IMR-90 (cell line): ENCODE measurements at regions of chr10 and their contacts with region 1.

Region 1: GRCh38 chr10:46234431-46235060 is 52.3 kb upstream of the ANTXRL start:
- DNase-seq: no peak
- ATAC-seq: no peak
- H3K4me3 ChIP-seq: no peak overlapping the region
- H3K27ac ChIP-seq: no peak overlapping the region
- H3K4me1 ChIP-seq: peaks cover 11% of the 10 kb centered on the region
- H3K27me3 ChIP-seq: no peaks in the 10 kb centered on the region; the same call in 1 of the 2 replicates
- CTCF ChIP-seq: no peak
- POLR2A ChIP-seq: no peak
- RAD21 ChIP-seq: no peak

Region 2: GRCh38 chr10:46318799-46319198 is 84.3 kb after region 1 on chr10:
- CTCF ChIA-PET with region 1: no interaction called
- POLR2A ChIA-PET with region 1: no interaction called
- dilution Hi-C with region 1: no loop called
- in situ Hi-C with region 1: no loop called
- intact Hi-C with region 1: loop called (anchors 5 kb)
- DNase-seq: no peak
- ATAC-seq: no peak
- H3K4me3 ChIP-seq: no peak overlapping the region
- H3K27ac ChIP-seq: no peak overlapping the region
- H3K4me1 ChIP-seq: peaks cover 25% of the 10 kb centered on the region
- H3K27me3 ChIP-seq: no peaks in the 10 kb centered on the region
- CTCF ChIP-seq: no peak
- POLR2A ChIP-seq: no peak
- RAD21 ChIP-seq: no peak